Activated CD4-positive, alpha-beta T cell treated with anti-CD3 and anti-CD28 coated beads for 36 hours (primary cell): ENCODE measurements at regions of chr4 and their contacts with region 1.

Region 1: GRCh38 chr4:25367004-25367621 is 9.9 kb upstream of the ANAPC4 start:
- DNase-seq: no peak
- ATAC-seq: no peak
- H3K4me3 Mint-ChIP-seq: no peak overlapping the region
- H3K27ac Mint-ChIP-seq: no peak overlapping the region
- H3K4me1 Mint-ChIP-seq: no peaks in the 10 kb centered on the region
- H3K27me3 Mint-ChIP-seq: no peaks in the 10 kb centered on the region

Region 2: DNA sequence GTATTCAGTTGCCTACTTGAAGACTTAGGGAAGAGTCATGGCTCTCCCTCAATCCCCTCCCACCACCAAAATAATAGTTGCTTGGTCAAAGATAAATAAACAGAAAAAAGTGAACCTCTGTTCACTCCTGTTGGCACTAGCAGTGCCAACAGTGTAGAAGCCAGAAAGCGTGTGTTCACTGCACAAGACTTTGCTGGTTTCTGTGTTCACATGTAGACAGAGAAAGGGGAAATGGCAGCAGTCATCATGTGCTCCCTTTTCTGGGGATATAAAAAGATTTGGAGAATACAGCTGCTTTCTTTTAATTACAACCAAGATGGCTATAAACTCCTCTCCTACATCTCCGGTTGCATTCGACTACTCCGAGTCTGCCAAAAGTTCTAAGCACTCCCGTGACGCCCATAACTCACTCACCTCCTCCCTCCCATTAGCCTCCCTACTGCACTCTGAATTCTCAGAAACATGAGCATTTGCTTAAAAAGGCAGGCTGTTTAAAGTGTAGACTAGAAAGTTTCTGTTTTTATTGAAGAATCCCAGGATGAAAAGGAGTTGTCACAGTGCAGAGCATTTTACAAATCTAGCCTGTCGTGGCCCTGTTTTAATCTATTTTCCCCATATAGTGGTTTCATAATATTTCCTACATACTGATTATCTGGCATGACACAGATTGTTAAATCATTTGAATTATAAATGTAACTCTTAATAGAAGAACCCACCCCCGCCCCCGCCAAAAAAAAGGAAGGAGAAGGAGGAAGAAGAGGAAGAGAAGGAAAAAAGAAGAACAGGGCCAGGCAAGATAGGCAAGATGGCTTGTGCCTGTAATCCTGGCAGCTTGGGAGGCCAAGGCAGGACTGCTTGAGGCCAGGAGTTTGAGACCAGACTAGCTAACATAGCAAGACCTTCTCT is 353.1 kb before region 1 on chr4:
- CTCF ChIA-PET with region 1: no interaction called
- POLR2A ChIA-PET with region 1: no interaction called
- intact Hi-C with region 1: no loop called
- DNase-seq: no peak
- ATAC-seq: no peak
- H3K4me3 Mint-ChIP-seq: no peak overlapping the region
- H3K27ac Mint-ChIP-seq: no peak overlapping the region
- H3K4me1 Mint-ChIP-seq: no peaks in the 10 kb centered on the region
- H3K27me3 Mint-ChIP-seq: peaks cover 5% of the 10 kb centered on the region

Region 3: DNA sequence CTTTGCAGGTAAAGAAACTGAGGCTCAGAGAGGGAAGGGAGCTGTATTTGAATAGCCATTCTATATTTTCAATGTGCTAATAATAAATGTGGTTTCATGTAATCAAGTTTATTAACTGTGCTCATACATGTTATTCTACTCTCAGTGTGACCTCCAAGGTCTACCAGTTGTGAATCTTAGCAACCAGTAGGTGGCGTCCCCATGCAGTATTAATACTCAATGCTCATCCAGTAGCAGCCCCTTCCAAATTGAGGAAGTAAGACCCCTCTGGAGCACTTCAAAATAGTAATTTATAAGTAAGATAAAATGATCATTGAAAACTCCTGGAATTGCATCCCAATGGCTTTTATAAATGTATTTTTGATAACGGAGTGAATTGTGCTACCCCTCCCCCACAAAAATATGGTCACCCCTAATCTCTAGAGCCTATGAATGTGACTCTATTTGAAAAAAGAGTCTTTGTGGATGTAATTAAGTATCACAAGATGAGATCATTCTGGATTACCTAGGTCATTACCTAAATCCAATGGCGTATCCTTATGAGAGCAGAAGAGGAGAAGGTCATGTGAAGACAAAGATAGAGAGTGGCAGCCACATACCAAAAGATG is 186.5 kb before region 1 on chr4:
- CTCF ChIA-PET with region 1: interaction called, 11 read pairs
- POLR2A ChIA-PET with region 1: no interaction called
- intact Hi-C with region 1: loop called (anchors 1 to 2 kb)
- DNase-seq: peak; percentile 50
- ATAC-seq: peak; percentile 57
- H3K4me3 Mint-ChIP-seq: no peak overlapping the region
- H3K27ac Mint-ChIP-seq: no peak overlapping the region
- H3K4me1 Mint-ChIP-seq: peaks cover 33% of the 10 kb centered on the region
- H3K27me3 Mint-ChIP-seq: no peaks in the 10 kb centered on the region

Region 4: DNA sequence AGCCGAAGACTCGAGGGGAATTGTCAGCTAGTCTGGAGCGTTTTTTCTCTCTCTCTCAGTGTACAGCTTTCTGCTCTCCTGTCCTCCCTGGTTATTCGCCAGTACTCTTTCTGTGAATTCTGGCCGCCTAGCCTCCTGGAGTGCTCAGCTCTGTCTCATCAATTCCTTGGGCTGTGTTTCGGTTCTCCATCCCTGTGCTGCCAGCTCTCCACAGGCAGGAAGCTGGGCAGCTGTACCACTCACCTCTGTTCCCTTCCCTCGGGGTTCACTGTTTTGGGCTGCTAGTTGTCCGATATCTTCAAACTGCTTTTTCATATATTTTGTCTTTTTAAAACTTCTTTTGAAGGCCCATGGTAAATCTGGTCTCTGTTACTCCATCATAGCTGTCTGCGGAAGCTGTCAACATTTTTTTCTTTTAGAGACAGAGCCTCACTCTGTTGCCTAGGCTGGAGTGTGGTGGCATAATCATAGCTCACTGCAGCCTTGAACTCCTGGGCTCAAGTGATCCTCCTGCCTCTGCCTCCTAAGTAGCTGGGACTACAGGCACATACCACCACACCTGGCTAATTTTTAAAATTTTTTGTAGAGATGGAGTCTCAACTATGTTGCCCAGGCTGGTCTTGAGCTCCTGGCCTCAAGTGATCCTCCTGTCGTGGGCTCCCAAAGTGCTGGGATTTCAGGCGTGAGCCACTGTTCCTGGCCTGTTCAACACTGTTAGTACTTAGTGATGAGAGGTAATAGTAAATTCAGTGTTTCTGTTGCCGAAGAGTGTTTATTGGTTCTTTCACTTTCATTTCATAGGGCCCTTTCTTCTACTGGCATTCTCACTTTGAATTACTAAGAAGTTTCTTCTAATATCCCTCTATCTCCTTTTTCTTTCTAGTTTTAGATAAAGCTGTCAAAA is 36.0 kb before region 1 on chr4:
- CTCF ChIA-PET with region 1: interaction called, 10 read pairs
- POLR2A ChIA-PET with region 1: no interaction called
- intact Hi-C with region 1: no loop called
- DNase-seq: no peak
- ATAC-seq: peak; percentile 93
- H3K4me3 Mint-ChIP-seq: peak overlapping the region; percentile 61
- H3K27ac Mint-ChIP-seq: peak overlapping the region; percentile 85
- H3K4me1 Mint-ChIP-seq: peaks cover 12% of the 10 kb centered on the region
- H3K27me3 Mint-ChIP-seq: no peaks in the 10 kb centered on the region